ENCODE measurements at regions of chr3 and their contacts with region 1.

Region 1: GRCh38 chr3:38521391-38521987 is 25.3 kb downstream of the EXOG start:
- DNase-seq: peak; percentile 75
- ATAC-seq: peak; percentile 59
- H3K4me3 Mint-ChIP-seq: no peak overlapping the region
- H3K27ac Mint-ChIP-seq: no peak overlapping the region
- H3K4me1 Mint-ChIP-seq: peaks cover 35% of the 10 kb centered on the region
- H3K27me3 Mint-ChIP-seq: no peaks in the 10 kb centered on the region

Region 2: GRCh38 chr3:38164966-38165680 is 356.4 kb before region 1 on chr3 and contains the start of gene OXSR1:
- CTCF ChIA-PET with region 1: interaction called, 12 read pairs
- POLR2A ChIA-PET with region 1: no interaction called
- DNase-seq: peak; percentile 99
- ATAC-seq: peak; percentile 93
- H3K4me3 Mint-ChIP-seq: peak within 1 kb of the TSS; percentile 86
- H3K27ac Mint-ChIP-seq: peak within 1 kb of the TSS; percentile 100
- H3K4me1 Mint-ChIP-seq: peaks cover 46% of the 10 kb centered on the region
- H3K27me3 Mint-ChIP-seq: no peaks in the 10 kb centered on the region
- total RNA-seq, gene OXSR1: 56.9 to 60.3 TPM

Region 3: DNA sequence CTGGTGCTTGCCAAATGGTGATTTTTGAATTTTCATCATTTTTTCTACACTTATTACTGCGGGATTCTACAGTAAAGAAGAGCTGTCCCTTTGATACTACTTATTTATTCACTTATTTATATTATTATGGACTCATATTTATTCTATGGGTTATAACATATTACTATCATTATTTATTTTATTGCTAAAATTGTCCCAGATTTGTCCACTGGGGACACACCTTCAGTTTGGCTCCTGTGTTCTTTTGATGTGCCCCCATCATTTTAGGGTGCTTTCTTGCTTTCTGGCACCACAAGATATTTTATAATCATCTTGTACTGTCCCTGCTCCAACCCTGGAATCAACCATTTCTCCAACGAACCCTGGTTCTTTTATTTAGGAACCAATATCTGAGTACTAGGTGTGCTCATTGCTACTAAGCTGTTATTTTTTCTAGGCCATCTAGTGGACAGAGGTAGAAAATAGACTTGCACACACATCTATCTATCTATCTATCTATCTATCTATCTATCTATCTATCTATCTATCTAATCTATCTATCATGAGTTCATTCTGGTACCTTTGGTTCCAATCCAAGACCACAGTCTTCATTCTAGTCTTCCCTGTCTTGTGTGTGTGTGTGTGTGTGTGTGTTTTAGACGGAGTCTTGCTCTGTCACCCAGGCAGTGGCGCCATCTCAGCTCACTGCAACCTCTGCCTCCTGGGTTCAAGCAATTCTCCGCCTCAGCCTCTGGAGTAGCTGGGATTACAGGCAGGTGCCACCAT is 223.4 kb before region 1 on chr3:
- CTCF ChIA-PET with region 1: no interaction called
- POLR2A ChIA-PET with region 1: no interaction called
- DNase-seq: no peak
- ATAC-seq: no peak
- H3K4me3 Mint-ChIP-seq: no peak overlapping the region
- H3K27ac Mint-ChIP-seq: no peak overlapping the region
- H3K4me1 Mint-ChIP-seq: no peaks in the 10 kb centered on the region
- H3K27me3 Mint-ChIP-seq: peaks cover 19% of the 10 kb centered on the region

Region 4: GRCh38 chr3:38487323-38487722 is 34.2 kb before region 1 on chr3:
- CTCF ChIA-PET with region 1: interaction called, 11 read pairs
- POLR2A ChIA-PET with region 1: no interaction called
- DNase-seq: no peak
- ATAC-seq: no peak
- H3K4me3 Mint-ChIP-seq: no peak overlapping the region
- H3K27ac Mint-ChIP-seq: no peak overlapping the region
- H3K4me1 Mint-ChIP-seq: peaks cover 7% of the 10 kb centered on the region
- H3K27me3 Mint-ChIP-seq: no peaks in the 10 kb centered on the region

Region 5: GRCh38 chr3:38507120-38507519 is 14.4 kb before region 1 on chr3:
- CTCF ChIA-PET with region 1: interaction called, 118 read pairs
- POLR2A ChIA-PET with region 1: no interaction called
- DNase-seq: no peak
- ATAC-seq: no peak
- H3K4me3 Mint-ChIP-seq: no peak overlapping the region
- H3K27ac Mint-ChIP-seq: no peak overlapping the region
- H3K4me1 Mint-ChIP-seq: no peaks in the 10 kb centered on the region
- H3K27me3 Mint-ChIP-seq: no peaks in the 10 kb centered on the region

Region 6: DNA sequence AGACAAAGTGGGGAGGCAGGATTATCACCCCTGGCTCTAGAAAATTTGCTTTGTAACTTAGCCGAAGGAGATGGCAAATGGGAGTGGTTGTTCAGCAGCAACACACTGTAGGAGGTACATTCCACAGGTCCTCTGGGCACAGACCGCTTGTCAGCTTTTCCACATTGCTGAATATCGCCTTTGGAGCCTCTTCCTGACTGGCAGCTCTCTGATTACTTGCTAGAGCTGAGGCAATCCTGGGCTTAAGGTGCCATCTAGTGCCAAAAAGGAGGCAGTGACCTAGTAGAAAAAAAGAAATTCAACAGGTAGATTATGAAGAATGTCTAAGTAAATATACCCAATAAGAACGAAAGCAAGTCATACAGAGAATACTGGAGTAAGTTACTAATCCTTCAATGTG is 141.1 kb after region 1 on chr3:
- CTCF ChIA-PET with region 1: interaction called, 21 read pairs
- POLR2A ChIA-PET with region 1: no interaction called
- DNase-seq: no peak
- ATAC-seq: no peak
- H3K4me3 Mint-ChIP-seq: no peak overlapping the region
- H3K27ac Mint-ChIP-seq: no peak overlapping the region
- H3K4me1 Mint-ChIP-seq: no peaks in the 10 kb centered on the region
- H3K27me3 Mint-ChIP-seq: peaks cover 30% of the 10 kb centered on the region

Region 7: GRCh38 chr3:38763569-38763968 is 242.1 kb after region 1 on chr3:
- CTCF ChIA-PET with region 1: no interaction called
- POLR2A ChIA-PET with region 1: no interaction called
- DNase-seq: no peak
- ATAC-seq: no peak
- H3K4me3 Mint-ChIP-seq: no peak overlapping the region
- H3K27ac Mint-ChIP-seq: no peak overlapping the region
- H3K4me1 Mint-ChIP-seq: no peaks in the 10 kb centered on the region
- H3K27me3 Mint-ChIP-seq: peaks cover 6% of the 10 kb centered on the region

Region 8: GRCh38 chr3:38805004-38805403 is 283.5 kb after region 1 on chr3:
- CTCF ChIA-PET with region 1: no interaction called
- POLR2A ChIA-PET with region 1: no interaction called
- DNase-seq: no peak
- ATAC-seq: no peak
- H3K4me3 Mint-ChIP-seq: no peak overlapping the region
- H3K27ac Mint-ChIP-seq: no peak overlapping the region
- H3K4me1 Mint-ChIP-seq: no peaks in the 10 kb centered on the region
- H3K27me3 Mint-ChIP-seq: peaks cover 3% of the 10 kb centered on the region

Region 9: GRCh38 chr3:39000008-39000450 is 478.5 kb after region 1 on chr3:
- CTCF ChIA-PET with region 1: interaction called, 31 read pairs
- POLR2A ChIA-PET with region 1: no interaction called
- DNase-seq: no peak
- ATAC-seq: peak; percentile 81
- H3K4me3 Mint-ChIP-seq: no peak overlapping the region
- H3K27ac Mint-ChIP-seq: no peak overlapping the region
- H3K4me1 Mint-ChIP-seq: no peaks in the 10 kb centered on the region
- H3K27me3 Mint-ChIP-seq: peaks cover 11% of the 10 kb centered on the region

Measured in activated CD8-positive, alpha-beta T cell treated with anti-CD3 and anti-CD28 coated beads, Interleukin-2, amount 10 ng/mL, durations not matched to agents 7 days and 5 days (primary cell).